Ovary (tissue), 10 donors: ENCODE measurements at regions of chr1 and their contacts with region 1.

Region 1: GRCh38 chr1:150473659-150474058 is 13.6 kb upstream of the TARS2 start:
- DNase-seq: peak; percentile 56 to 82 (median 67)
- H3K4me3 ChIP-seq: no peak overlapping the region
- H3K27ac ChIP-seq: peak overlapping the region in 1 of 2 donors; percentile 56
- H3K4me1 ChIP-seq: peaks cover 19% of the 10 kb centered on the region
- H3K27me3 ChIP-seq: no peaks in the 10 kb centered on the region
- CTCF ChIP-seq: no peak
- EP300 ChIP-seq: no peak
- POLR2A ChIP-seq: no peak

Region 2: DNA sequence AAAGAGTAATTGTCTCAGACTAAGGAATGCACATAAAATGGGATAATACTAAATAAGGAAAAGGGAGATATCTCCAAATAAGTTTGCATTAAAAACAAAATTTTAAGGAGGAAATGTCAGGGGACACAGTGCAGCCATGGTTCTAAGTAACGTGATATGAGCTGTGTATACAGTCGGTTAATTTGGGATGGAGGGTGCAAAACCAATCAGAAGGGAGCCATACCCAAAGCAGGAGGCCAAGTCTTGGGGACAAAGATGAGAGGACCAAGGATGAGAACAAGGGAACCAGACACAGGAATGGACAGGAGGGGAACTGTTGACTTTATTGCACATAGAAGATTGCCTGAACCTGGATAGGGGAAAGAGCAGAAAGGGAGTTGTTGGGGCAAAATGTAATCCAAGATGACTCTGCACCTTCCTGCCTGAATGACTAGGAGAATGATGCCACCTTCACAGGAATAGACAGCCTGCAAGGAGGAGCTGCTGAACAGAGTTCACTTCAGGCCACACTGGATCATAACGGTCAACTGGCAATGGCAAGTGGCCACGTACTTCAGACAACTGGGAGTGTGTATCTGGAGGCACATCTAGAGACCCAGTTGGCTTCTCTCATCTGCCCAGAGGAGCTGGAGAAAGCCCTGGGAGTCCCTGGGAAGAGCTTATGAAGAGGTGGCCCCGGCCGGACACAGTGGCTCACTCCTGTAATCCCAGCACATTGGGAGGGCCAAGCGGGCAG is 596.3 kb before region 1 on chr1:
- intact Hi-C with region 1: no loop called
- DNase-seq: no peak
- H3K4me3 ChIP-seq: no peak overlapping the region
- H3K27ac ChIP-seq: no peak overlapping the region
- H3K4me1 ChIP-seq: no peaks in the 10 kb centered on the region
- H3K27me3 ChIP-seq: no peaks in the 10 kb centered on the region
- CTCF ChIP-seq: no peak
- EP300 ChIP-seq: no peak
- POLR2A ChIP-seq: no peak

Region 3: GRCh38 chr1:150532868-150533302 is 59.2 kb after region 1 on chr1:
- intact Hi-C with region 1: loop called in 3 of 4 experiments (anchors 5 to 10 kb)
- DNase-seq: no peak
- H3K4me3 ChIP-seq: no peak overlapping the region
- H3K27ac ChIP-seq: no peak overlapping the region
- H3K4me1 ChIP-seq: no peaks in the 10 kb centered on the region
- H3K27me3 ChIP-seq: no peaks in the 10 kb centered on the region
- CTCF ChIP-seq: peak in 1 of 3 donors; percentile 2
- EP300 ChIP-seq: no peak
- POLR2A ChIP-seq: no peak

Region 4: DNA sequence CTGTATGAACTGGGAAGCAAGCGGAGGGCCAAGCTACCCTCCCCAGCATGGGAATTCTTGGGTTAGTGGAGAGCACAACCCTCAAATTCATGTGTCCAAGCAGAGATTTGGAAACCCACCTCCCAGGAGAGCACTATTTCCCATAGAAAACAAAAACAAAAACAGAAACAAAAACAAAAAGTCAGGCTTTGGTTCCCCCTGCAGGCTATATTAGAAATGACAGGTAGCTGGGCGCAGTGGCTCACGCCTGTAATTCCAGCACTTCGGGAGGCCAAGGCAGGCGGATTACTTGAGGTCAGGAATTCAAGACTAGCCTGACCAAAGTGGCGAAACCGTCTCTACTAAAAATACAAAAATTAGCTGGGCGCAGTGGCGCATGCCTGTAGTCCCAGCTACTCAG is 522.2 kb after region 1 on chr1:
- intact Hi-C with region 1: loop called in 1 of 4 experiments (anchors 5 kb)
- DNase-seq: peak in 1 of 5 donors; percentile 64
- H3K4me3 ChIP-seq: peak overlapping the region; percentile 11
- H3K27ac ChIP-seq: peak overlapping the region; percentile 11 to 41
- H3K4me1 ChIP-seq: peaks cover 1% of the 10 kb centered on the region
- H3K27me3 ChIP-seq: no peaks in the 10 kb centered on the region
- CTCF ChIP-seq: peak; percentile 68 to 72 (median 70)
- EP300 ChIP-seq: no peak
- POLR2A ChIP-seq: no peak